ENCODE measurements at regions of chr5 and their contacts with region 1.

Region 1: GRCh38 chr5:127216898-127217675 is 73.5 kb upstream of the MEGF10 start:
- DNase-seq: no peak
- ATAC-seq: no peak
- H3K4me3 ChIP-seq: no peak overlapping the region
- H3K27ac ChIP-seq: no peak overlapping the region
- H3K4me1 ChIP-seq: no peaks in the 10 kb centered on the region
- H3K27me3 ChIP-seq: peaks cover 6% of the 10 kb centered on the region; the same call in 1 of the 2 replicates
- CTCF ChIP-seq: no peak
- POLR2A ChIP-seq: no peak
- RAD21 ChIP-seq: no peak

Region 2: DNA sequence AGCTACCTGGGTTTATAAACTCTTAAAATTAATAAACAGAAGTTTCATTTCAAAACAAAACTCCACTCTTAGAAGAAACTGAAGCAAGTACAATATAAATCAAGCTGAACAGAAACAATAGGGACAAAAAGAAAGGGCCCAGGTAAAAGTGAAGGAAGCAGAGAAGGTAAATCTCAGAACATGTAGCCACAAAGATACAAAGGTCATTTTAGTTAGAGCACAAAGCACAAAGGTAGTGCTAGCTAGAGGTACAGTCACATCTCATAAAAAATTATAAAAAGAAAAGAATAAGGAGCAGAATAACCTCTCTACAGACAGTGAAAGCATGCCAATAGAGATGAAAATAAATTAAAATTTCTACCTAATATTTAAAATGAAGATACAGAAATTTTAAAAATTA is 53.3 kb before region 1 on chr5:
- CTCF ChIA-PET with region 1: no interaction called
- POLR2A ChIA-PET with region 1: no interaction called
- dilution Hi-C with region 1: no loop called
- in situ Hi-C with region 1: no loop called
- intact Hi-C with region 1: loop called (anchors 10 kb)
- DNase-seq: no peak
- ATAC-seq: no peak
- H3K4me3 ChIP-seq: no peak overlapping the region
- H3K27ac ChIP-seq: no peak overlapping the region
- H3K4me1 ChIP-seq: no peaks in the 10 kb centered on the region
- H3K27me3 ChIP-seq: no peaks in the 10 kb centered on the region
- CTCF ChIP-seq: no peak
- POLR2A ChIP-seq: no peak
- RAD21 ChIP-seq: no peak